PC-9 (cell line): ENCODE measurements at regions of chr9 and their contacts with region 1.

Region 1: GRCh38 chr9:135692410-135692809 is 6.9 kb downstream of the SOHLH1 start:
- DNase-seq: no peak
- H3K4me3 ChIP-seq: no peak overlapping the region
- H3K27ac ChIP-seq: no peak overlapping the region
- H3K4me1 ChIP-seq: no peaks in the 10 kb centered on the region
- H3K27me3 ChIP-seq: peaks cover 95% of the 10 kb centered on the region
- CTCF ChIP-seq: no peak

Region 2: GRCh38 chr9:135148386-135148785 is 544.0 kb before region 1 on chr9:
- CTCF ChIA-PET with region 1: no interaction called
- POLR2A ChIA-PET with region 1: interaction called, 11 read pairs
- intact Hi-C with region 1: no loop called
- DNase-seq: no peak
- H3K4me3 ChIP-seq: no peak overlapping the region
- H3K27ac ChIP-seq: no peak overlapping the region
- H3K4me1 ChIP-seq: no peaks in the 10 kb centered on the region
- H3K27me3 ChIP-seq: peaks cover 96% of the 10 kb centered on the region
- CTCF ChIP-seq: no peak

Region 3: DNA sequence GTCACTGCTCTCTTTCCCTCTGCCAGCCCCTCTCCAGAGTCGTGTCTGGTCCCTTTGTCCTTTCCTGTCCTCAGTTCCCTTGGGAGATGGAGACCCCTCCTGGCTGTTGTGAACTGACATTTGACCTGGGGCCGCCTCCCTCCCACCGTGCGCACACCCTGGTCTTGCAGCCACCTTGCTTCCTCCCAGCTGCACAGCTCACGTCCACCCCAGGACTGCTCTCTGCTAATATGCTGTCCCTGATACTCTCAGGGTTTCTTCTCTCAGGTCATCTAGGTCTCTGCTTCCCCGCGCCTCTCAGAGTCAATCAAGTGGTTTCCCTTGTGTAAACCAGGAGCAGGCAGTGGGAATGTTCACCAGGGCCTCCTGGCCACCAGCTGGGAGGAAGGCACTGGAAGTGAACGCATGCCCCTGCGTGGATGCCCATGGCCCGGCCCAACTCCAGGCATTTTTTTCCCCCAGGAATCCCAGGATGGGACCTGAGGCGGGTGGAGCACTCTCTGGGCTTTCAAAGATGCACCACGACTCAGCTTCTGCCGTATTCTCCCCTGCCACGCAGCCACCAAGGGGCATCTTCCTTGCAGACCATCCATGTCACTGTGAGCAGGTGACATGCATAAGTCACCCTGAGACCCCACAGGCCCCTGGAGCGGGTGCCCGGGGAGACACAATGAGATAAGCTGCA is 462.6 kb before region 1 on chr9:
- CTCF ChIA-PET with region 1: no interaction called
- POLR2A ChIA-PET with region 1: no interaction called
- intact Hi-C with region 1: loop called (anchors 5 kb)
- DNase-seq: no peak
- H3K4me3 ChIP-seq: no peak overlapping the region
- H3K27ac ChIP-seq: no peak overlapping the region
- H3K4me1 ChIP-seq: no peaks in the 10 kb centered on the region
- H3K27me3 ChIP-seq: peaks cover 51% of the 10 kb centered on the region
- CTCF ChIP-seq: no peak